HEK293T (cell line): ENCODE measurements at regions of chr1 and their contacts with region 1.

Region 1: DNA sequence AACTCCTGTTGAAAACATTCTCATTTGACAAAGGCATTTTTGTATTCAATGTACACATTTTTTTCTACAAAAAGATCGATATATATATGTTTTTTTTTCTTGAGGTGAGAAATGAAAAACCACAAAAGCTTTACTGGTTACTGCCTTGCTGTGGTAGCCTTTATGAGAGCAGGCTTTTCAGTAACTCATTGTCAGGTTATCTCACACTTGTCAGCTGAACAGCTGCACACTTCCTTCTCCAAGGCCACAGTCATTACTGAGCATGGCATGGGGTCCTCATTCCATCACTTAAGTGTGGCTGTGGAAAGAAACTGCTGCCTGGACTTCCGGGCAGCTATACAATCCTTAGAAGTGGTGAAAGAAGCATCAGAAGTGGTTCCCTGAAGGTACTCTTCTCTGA is 169.3 kb upstream of the ZP4 start:
- DNase-seq: no peak

Region 2: GRCh38 chr1:238018214-238018613 is 41.8 kb before region 1 on chr1:
- CTCF ChIA-PET with region 1: interaction called, 13 read pairs
- POLR2A ChIA-PET with region 1: no interaction called
- DNase-seq: no peak